Vagina (tissue), 2 donors: ENCODE measurements at regions of chr9 and their contacts with region 1.

Region 1: GRCh38 chr9:130290291-130291181 is 25.0 kb downstream of the HMCN2 start:
- DNase-seq: peak in 1 of 2 donors; percentile 98
- H3K4me3 ChIP-seq: no peak overlapping the region
- H3K27ac ChIP-seq: peak overlapping the region; percentile 71
- H3K4me1 ChIP-seq: peaks cover 40% of the 10 kb centered on the region
- H3K27me3 ChIP-seq: no peaks in the 10 kb centered on the region
- CTCF ChIP-seq: no peak
- POLR2A ChIP-seq: no peak

Region 2: GRCh38 chr9:130327070-130327780 is 36.7 kb after region 1 on chr9:
- intact Hi-C with region 1: loop called (anchors 5 kb)
- DNase-seq: no peak
- H3K4me3 ChIP-seq: no peak overlapping the region
- H3K27ac ChIP-seq: peak overlapping the region; percentile 82
- H3K4me1 ChIP-seq: peaks cover 46% of the 10 kb centered on the region
- H3K27me3 ChIP-seq: no peaks in the 10 kb centered on the region
- CTCF ChIP-seq: no peak
- POLR2A ChIP-seq: no peak

Region 3: DNA sequence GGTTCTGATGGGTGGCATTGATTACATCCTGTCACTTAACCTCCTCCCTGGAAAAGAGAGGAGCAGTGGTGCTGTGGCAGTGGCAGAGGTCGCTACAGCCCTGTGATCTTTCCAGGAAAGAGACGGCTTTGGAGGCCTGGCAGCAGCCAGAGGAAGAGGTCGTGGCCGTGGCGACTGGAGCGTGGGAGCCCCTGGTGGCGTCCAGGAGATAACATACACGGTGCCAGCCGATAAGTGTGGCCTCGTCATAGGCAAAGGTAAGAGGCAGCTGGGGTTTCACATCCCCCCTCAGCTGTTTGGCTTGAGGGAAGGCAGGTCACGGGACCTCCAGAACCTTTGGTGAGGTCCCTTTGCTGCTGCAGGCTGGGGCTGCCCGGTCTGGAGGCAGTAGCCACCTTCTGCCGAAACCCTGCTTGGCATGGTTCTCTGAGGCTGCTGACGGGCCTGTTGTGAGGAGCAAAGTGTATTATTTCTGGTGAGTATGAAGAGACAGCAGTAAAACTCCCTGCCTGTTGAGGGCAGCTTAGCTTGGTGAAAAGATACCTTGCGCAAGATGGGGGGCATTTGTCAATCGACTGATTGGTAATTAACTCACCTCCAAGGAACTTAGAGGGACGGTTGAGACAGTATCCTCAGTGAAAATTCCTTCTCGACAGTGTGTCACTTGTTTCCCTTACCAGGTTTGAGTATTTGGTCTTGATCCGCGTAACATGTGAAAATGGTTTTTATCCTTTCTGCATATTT is 335.9 kb after region 1 on chr9:
- intact Hi-C with region 1: no loop called
- DNase-seq: no peak
- H3K4me3 ChIP-seq: no peak overlapping the region
- H3K27ac ChIP-seq: no peak overlapping the region
- H3K4me1 ChIP-seq: no peaks in the 10 kb centered on the region
- H3K27me3 ChIP-seq: no peaks in the 10 kb centered on the region
- CTCF ChIP-seq: no peak
- POLR2A ChIP-seq: no peak